Calu3 (cell line): ENCODE measurements at regions of chr14 and their contacts with region 1.

Region 1: GRCh38 chr14:20343092-20343861 is at the start of gene PARP2:
- DNase-seq: peak; percentile 98
- H3K4me3 Mint-ChIP-seq: peak within 1 kb of the TSS; percentile 93
- H3K27ac Mint-ChIP-seq: peak within 1 kb of the TSS; percentile 98
- H3K4me1 Mint-ChIP-seq: peaks cover 7% of the 10 kb centered on the region
- H3K27me3 Mint-ChIP-seq: no peaks in the 10 kb centered on the region
- CTCF ChIP-seq: no peak
- total RNA-seq, gene PARP2: 28.6 and 30.5 TPM in 2 replicates

Region 2: GRCh38 chr14:20305265-20306078 is 37.8 kb before region 1 on chr14 and contains the start of gene TTC5:
- CTCF ChIA-PET with region 1: no interaction called
- intact Hi-C with region 1: no loop called
- DNase-seq: peak; percentile 87
- H3K4me3 Mint-ChIP-seq: peak within 1 kb of the TSS; percentile 92
- H3K27ac Mint-ChIP-seq: peak within 1 kb of the TSS; percentile 87
- H3K4me1 Mint-ChIP-seq: peaks cover 17% of the 10 kb centered on the region
- H3K27me3 Mint-ChIP-seq: no peaks in the 10 kb centered on the region
- CTCF ChIP-seq: peak; percentile 87
- total RNA-seq, gene TTC5: 20.6 and 28.2 TPM in 2 replicates

Region 3: GRCh38 chr14:20327005-20327869 is 16.0 kb before region 1 on chr14:
- CTCF ChIA-PET with region 1: interaction called, 12 read pairs
- intact Hi-C with region 1: no loop called
- DNase-seq: peak; percentile 36
- H3K4me3 Mint-ChIP-seq: no peak overlapping the region
- H3K27ac Mint-ChIP-seq: no peak overlapping the region
- H3K4me1 Mint-ChIP-seq: peaks cover 13% of the 10 kb centered on the region
- H3K27me3 Mint-ChIP-seq: no peaks in the 10 kb centered on the region
- CTCF ChIP-seq: peak; percentile 46

Region 4: GRCh38 chr14:20332788-20333493 is 10.3 kb before region 1 on chr14 and contains the start of gene CCNB1IP1:
- CTCF ChIA-PET with region 1: interaction called, 12 read pairs
- intact Hi-C with region 1: no loop called
- DNase-seq: peak; percentile 56
- H3K4me3 Mint-ChIP-seq: peak within 1 kb of the TSS; percentile 93
- H3K27ac Mint-ChIP-seq: peak within 1 kb of the TSS; percentile 85
- H3K4me1 Mint-ChIP-seq: peaks cover 13% of the 10 kb centered on the region
- H3K27me3 Mint-ChIP-seq: no peaks in the 10 kb centered on the region
- CTCF ChIP-seq: no peak
- total RNA-seq, gene CCNB1IP1: 37.3 and 39.0 TPM in 2 replicates

Region 5: GRCh38 chr14:20415782-20416206 is 72.5 kb after region 1 on chr14:
- CTCF ChIA-PET with region 1: interaction called, 4 read pairs
- intact Hi-C with region 1: loop called (anchors 5 kb)
- DNase-seq: peak; percentile 55
- H3K4me3 Mint-ChIP-seq: no peak overlapping the region
- H3K27ac Mint-ChIP-seq: peak overlapping the region; percentile 18
- H3K4me1 Mint-ChIP-seq: peaks cover 36% of the 10 kb centered on the region
- H3K27me3 Mint-ChIP-seq: no peaks in the 10 kb centered on the region
- CTCF ChIP-seq: peak; percentile 30

Region 6: GRCh38 chr14:20454516-20455354 is 111.5 kb after region 1 on chr14 and contains the starts of genes APEX1 and OSGEP:
- CTCF ChIA-PET with region 1: interaction called, 3 read pairs
- intact Hi-C with region 1: loop called (anchors 5 kb)
- DNase-seq: peak; percentile 96
- H3K4me3 Mint-ChIP-seq: no peak within 1 kb of the TSS
- H3K27ac Mint-ChIP-seq: no peak within 1 kb of the TSS
- H3K4me1 Mint-ChIP-seq: peaks cover 4% of the 10 kb centered on the region
- H3K27me3 Mint-ChIP-seq: no peaks in the 10 kb centered on the region
- CTCF ChIP-seq: no peak
- total RNA-seq, gene APEX1: 205 TPM in 2 replicates
- total RNA-seq, gene OSGEP: 46.2 and 54.3 TPM in 2 replicates

Region 7: GRCh38 chr14:21087294-21088091 is 744.2 kb after region 1 on chr14:
- CTCF ChIA-PET with region 1: no interaction called
- intact Hi-C with region 1: no loop called
- DNase-seq: no peak
- H3K4me3 Mint-ChIP-seq: no peak overlapping the region
- H3K27ac Mint-ChIP-seq: no peak overlapping the region
- H3K4me1 Mint-ChIP-seq: peaks cover 8% of the 10 kb centered on the region
- H3K27me3 Mint-ChIP-seq: no peaks in the 10 kb centered on the region
- CTCF ChIP-seq: no peak